ENCODE measurements at regions of chr6 and their contacts with region 1.

Region 1: DNA sequence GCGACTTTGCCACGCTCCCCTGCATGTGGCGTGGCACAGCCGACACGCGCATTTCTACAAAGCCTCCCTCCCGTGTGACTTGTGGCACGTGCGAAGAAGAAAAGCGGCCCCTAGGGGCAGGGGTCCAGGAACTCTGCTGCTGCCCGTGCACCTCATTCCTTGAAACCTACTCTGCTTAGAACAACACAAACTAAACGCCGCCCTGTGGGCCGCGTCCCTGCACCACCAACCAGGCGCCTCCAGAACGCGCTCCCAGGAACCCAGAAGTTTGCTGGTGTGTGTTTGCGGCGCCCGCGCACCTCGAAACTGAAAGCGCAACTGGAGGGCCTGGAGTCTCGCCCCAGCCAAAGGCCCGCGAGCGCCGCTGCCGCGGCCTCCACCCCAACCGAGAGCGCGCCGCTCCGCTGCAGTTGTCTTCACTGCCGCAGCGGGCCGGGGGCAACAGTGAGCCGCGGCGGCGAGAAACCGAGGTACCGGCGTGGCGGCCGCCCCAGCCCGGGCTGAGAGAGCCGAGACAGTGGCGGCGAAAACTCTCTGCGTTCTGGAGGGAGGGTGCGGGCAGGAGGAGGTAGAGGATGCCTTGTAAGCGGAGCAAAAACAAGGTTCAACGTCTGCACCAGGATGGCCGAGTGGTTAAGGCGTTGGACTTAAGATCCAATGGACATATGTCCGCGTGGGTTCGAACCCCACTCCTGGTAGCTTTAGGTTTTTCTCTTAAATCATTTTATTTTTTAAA is 65.8 kb downstream of the STX11 start:
- DNase-seq: peak; percentile 94
- ATAC-seq: peak; percentile 95

Region 2: GRCh38 chr6:144104898-144105487 is 111.1 kb before region 1 on chr6:
- intact Hi-C with region 1: loop called (anchors 5 kb)
- DNase-seq: no peak
- ATAC-seq: peak; percentile 88

Region 3: DNA sequence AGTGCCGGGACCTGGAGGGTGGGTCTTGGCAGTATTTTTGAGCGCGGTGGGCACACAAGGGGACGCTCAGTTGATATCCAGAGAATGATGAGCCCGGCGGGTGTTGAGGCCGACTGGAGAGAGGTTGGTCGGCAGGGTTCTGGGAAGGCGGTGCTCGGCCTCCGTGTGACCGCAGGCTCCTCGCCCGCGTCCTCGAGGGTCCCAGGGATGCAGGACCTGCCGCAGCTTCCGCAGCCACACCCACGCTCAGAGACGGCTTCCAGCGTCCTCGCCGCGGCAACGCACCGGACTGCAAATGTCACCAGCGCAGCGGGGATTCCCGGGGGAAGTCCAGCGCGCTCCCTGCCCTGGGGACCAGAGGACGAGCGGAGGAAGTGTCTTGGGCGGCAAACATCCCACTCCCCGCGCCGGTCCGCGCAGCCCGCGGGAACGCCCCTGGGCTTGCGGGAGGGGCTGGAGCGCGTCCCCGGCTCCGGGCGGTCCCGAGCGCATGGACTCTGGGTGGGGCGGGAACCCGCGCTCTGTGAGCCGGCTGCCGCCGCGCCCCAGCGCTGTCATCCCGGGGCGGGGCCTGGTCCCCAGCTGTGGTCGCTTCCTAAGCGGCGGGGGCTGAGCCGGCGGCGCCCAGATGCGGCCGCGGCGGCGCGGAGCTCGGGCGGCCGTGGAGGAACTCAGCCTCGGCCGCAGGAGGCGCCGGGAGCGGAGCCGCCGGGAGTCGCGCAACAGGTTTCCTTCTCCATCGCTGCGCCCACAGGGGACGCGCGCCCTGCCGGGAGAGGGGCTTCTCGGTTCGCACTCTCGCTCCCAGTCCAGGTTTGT is 66.0 kb before region 1 on chr6 and contains the start of gene STX11:
- intact Hi-C with region 1: loop called (anchors 2 to 5 kb)
- DNase-seq: peak; percentile 80
- ATAC-seq: peak; percentile 94 to 97
- total RNA-seq, gene STX11: 11.3 to 11.4 TPM

Region 4: GRCh38 chr6:144294016-144294415 is 77.9 kb after region 1 on chr6:
- intact Hi-C with region 1: no loop called
- DNase-seq: no peak
- ATAC-seq: peak in 1 of 2 donors; percentile 44

Region 5: DNA sequence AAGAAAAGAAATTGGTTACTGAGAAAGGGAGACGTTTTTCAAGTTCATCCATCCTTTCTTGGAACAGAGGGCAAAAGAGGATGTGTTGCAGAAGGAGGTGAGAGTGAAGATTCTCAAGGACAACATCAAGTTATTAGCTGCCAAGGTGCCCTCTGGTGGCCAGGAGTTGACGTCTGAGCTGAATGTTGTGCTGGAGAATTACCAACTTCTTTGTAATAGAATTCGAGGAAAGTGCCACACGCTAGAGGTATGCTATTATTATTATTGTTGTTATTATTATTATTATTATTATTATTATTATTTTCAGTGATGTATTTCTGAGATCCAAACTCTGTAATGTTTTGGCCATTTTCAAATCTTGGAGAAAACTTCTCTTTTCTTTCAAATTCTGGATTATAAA is 266.0 kb after region 1 on chr6:
- intact Hi-C with region 1: loop called (anchors 2 to 10 kb)
- DNase-seq: peak; percentile 81
- ATAC-seq: peak in 1 of 2 donors; percentile 61

Measured in left cardiac atrium (tissue), 4 donors.